B cell (primary cell): ENCODE measurements at regions of chr5 and their contacts with region 1.

Region 1: GRCh38 chr5:10627160-10627701 is 63.4 kb downstream of the ANKRD33B start:
- DNase-seq: no peak
- ATAC-seq: no peak
- H3K4me3 ChIP-seq: peak overlapping the region; percentile 9 to 64 (median 46)
- H3K4me3 Mint-ChIP-seq: peak overlapping the region; percentile 79
- H3K27ac ChIP-seq: no peak overlapping the region
- H3K27ac Mint-ChIP-seq: peak overlapping the region; percentile 22
- H3K4me1 ChIP-seq: peaks cover 30 to 39% of the 10 kb centered on the region in 2 donors
- H3K4me1 Mint-ChIP-seq: peaks cover 57% of the 10 kb centered on the region
- H3K27me3 ChIP-seq: no peaks in the 10 kb centered on the region
- H3K27me3 Mint-ChIP-seq: no peaks in the 10 kb centered on the region
- CTCF ChIP-seq: no peak

Region 2: GRCh38 chr5:10220243-10220642 is 407.0 kb before region 1 on chr5:
- CTCF ChIA-PET with region 1: no interaction called
- POLR2A ChIA-PET with region 1: no interaction called
- intact Hi-C with region 1: no loop called
- DNase-seq: no peak
- ATAC-seq: no peak
- H3K4me3 ChIP-seq: no peak overlapping the region
- H3K4me3 Mint-ChIP-seq: no peak overlapping the region
- H3K27ac ChIP-seq: no peak overlapping the region
- H3K27ac Mint-ChIP-seq: no peak overlapping the region
- H3K4me1 ChIP-seq: no peaks in the 10 kb centered on the region
- H3K4me1 Mint-ChIP-seq: no peaks in the 10 kb centered on the region
- H3K27me3 ChIP-seq: no peaks in the 10 kb centered on the region
- H3K27me3 Mint-ChIP-seq: no peaks in the 10 kb centered on the region
- CTCF ChIP-seq: no peak

Region 3: GRCh38 chr5:10441083-10441991 is 185.9 kb before region 1 on chr5 and contains the start of gene ROPN1L:
- CTCF ChIA-PET with region 1: interaction called, 11 read pairs
- POLR2A ChIA-PET with region 1: no interaction called
- intact Hi-C with region 1: no loop called
- DNase-seq: peak; percentile 86
- ATAC-seq: peak; percentile 95
- H3K4me3 ChIP-seq: peak within 1 kb of the TSS; percentile 66 to 85 (median 70)
- H3K4me3 Mint-ChIP-seq: peak within 1 kb of the TSS; percentile 93
- H3K27ac ChIP-seq: no peak within 1 kb of the TSS
- H3K27ac Mint-ChIP-seq: peak within 1 kb of the TSS; percentile 59
- H3K4me1 ChIP-seq: peaks cover 27 to 41% of the 10 kb centered on the region in 2 donors
- H3K4me1 Mint-ChIP-seq: peaks cover 35% of the 10 kb centered on the region
- H3K27me3 ChIP-seq: peaks cover 0 to 5% (median 0%) of the 10 kb centered on the region in 4 experiments
- H3K27me3 Mint-ChIP-seq: peaks cover 4% of the 10 kb centered on the region
- CTCF ChIP-seq: no peak
- total RNA-seq, gene ROPN1L: 0.34 and 0.91 TPM in 2 replicates

Region 4: GRCh38 chr5:10505517-10506095 is 121.6 kb before region 1 on chr5:
- CTCF ChIA-PET with region 1: interaction called, 10 read pairs
- POLR2A ChIA-PET with region 1: no interaction called
- intact Hi-C with region 1: no loop called
- DNase-seq: peak; percentile 84
- ATAC-seq: peak; percentile 94
- H3K4me3 ChIP-seq: no peak overlapping the region
- H3K4me3 Mint-ChIP-seq: no peak overlapping the region
- H3K27ac ChIP-seq: peak overlapping the region; percentile 27 to 32
- H3K27ac Mint-ChIP-seq: peak overlapping the region; percentile 65
- H3K4me1 ChIP-seq: peaks cover 15 to 16% of the 10 kb centered on the region in 2 donors
- H3K4me1 Mint-ChIP-seq: peaks cover 19% of the 10 kb centered on the region
- H3K27me3 ChIP-seq: no peaks in the 10 kb centered on the region
- H3K27me3 Mint-ChIP-seq: no peaks in the 10 kb centered on the region
- CTCF ChIP-seq: no peak

Region 5: DNA sequence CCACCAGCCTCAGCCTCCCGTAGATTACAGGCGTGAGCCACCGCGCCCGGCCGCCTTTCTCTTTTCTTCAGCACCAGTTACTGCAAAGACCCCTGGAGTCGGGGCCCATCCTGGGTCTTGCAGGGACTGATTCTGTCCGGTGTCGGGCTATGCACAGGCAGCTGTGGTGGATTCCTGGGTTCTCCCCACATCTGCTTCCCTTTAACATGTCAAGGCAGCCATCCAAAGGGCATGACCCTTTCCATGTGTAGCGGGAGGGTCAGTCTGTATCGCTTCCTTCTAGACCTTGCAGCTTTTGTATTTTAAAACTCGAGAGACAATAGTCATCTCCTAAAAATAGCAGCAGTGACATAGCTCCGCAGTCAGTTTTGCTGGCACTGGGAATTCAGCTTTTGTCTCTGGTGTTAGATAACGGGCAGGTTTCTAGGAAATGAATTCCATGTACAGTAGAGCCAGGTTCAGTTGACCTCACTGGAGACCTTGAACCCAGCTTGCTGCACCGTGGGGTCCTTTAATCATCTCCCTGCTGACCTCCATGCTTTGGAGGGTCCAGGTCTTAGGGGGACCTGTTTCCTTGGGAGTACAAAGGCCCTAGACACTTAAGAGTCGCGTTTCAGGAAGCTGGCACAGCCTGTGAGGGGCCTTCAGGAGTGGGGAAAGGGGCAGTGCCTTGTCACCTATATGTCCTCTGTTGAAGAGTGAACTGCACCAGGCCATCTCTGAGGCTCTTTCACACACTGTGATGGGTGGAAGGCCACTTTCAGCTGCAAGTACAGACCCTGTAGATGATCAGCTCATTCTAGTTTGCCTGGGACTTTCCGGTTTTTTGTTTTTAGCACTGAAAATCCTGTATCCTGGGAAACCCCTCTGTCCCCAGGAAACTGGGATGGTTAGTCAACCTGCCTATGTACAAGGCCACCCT is 49.6 kb before region 1 on chr5:
- CTCF ChIA-PET with region 1: interaction called, 10 read pairs
- POLR2A ChIA-PET with region 1: no interaction called
- intact Hi-C with region 1: loop called (anchors 1 kb)
- DNase-seq: peak; percentile 12
- ATAC-seq: no peak
- H3K4me3 ChIP-seq: no peak overlapping the region
- H3K4me3 Mint-ChIP-seq: peak overlapping the region; percentile 52
- H3K27ac ChIP-seq: no peak overlapping the region
- H3K27ac Mint-ChIP-seq: peak overlapping the region; percentile 64
- H3K4me1 ChIP-seq: peaks cover 59 to 60% of the 10 kb centered on the region in 2 donors
- H3K4me1 Mint-ChIP-seq: peaks cover 81% of the 10 kb centered on the region
- H3K27me3 ChIP-seq: no peaks in the 10 kb centered on the region
- H3K27me3 Mint-ChIP-seq: no peaks in the 10 kb centered on the region
- CTCF ChIP-seq: no peak

Region 6: GRCh38 chr5:10607666-10608073 is 19.6 kb before region 1 on chr5:
- CTCF ChIA-PET with region 1: interaction called, 52 read pairs
- POLR2A ChIA-PET with region 1: interaction called, 5 read pairs
- intact Hi-C with region 1: no loop called
- DNase-seq: peak; percentile 76
- ATAC-seq: peak; percentile 26
- H3K4me3 ChIP-seq: peak overlapping the region in 4 of 5 experiments; percentile 23 to 59 (median 40)
- H3K4me3 Mint-ChIP-seq: peak overlapping the region; percentile 82
- H3K27ac ChIP-seq: peak overlapping the region; percentile 45 to 73
- H3K27ac Mint-ChIP-seq: peak overlapping the region; percentile 86
- H3K4me1 ChIP-seq: peaks cover 25 to 30% of the 10 kb centered on the region in 2 donors
- H3K4me1 Mint-ChIP-seq: peaks cover 49% of the 10 kb centered on the region
- H3K27me3 ChIP-seq: no peaks in the 10 kb centered on the region
- H3K27me3 Mint-ChIP-seq: no peaks in the 10 kb centered on the region
- CTCF ChIP-seq: no peak